Endothelial cell of umbilical vein (primary cell): ENCODE measurements at regions of chr14 and their contacts with region 1.

Region 1: DNA sequence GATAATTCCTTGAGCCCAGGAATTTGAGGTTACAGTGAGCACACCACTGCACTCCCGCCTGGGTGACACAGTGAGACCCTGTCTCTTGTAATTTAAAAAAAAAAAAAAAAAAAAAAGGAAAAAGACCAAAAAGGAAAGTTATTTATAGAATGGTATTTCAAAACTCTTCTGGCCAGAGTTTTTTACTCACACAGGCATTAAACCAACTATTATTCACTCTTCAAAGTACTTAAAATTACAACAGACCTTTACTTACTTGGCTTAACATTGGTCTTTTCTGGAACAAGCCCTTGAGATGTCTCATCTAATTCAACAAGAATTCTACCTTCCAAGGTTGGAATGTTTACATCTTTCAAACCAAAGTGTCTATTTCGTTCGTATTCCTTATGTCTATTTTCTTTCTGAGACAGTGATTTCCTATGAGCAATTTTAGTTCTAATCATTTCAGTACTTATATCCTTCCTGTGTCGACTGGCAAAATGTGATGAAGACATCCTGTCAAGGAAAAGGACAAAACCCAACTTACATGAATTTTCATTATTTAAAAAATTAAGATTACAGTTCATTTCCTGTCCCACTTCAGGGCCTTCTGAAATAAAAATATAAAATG is 2.6 kb downstream of the DLGAP5 start:
- DNase-seq: peak; percentile 56
- H3K4me3 ChIP-seq: peak overlapping the region in 2 of 3 experiments; percentile 40 to 80
- H3K27ac ChIP-seq: peak overlapping the region; percentile 54
- H3K4me1 ChIP-seq: peaks cover 28% of the 10 kb centered on the region
- H3K27me3 ChIP-seq: no peaks in the 10 kb centered on the region
- CTCF ChIP-seq: no peak
- POLR2A ChIP-seq: no peak

Region 2: DNA sequence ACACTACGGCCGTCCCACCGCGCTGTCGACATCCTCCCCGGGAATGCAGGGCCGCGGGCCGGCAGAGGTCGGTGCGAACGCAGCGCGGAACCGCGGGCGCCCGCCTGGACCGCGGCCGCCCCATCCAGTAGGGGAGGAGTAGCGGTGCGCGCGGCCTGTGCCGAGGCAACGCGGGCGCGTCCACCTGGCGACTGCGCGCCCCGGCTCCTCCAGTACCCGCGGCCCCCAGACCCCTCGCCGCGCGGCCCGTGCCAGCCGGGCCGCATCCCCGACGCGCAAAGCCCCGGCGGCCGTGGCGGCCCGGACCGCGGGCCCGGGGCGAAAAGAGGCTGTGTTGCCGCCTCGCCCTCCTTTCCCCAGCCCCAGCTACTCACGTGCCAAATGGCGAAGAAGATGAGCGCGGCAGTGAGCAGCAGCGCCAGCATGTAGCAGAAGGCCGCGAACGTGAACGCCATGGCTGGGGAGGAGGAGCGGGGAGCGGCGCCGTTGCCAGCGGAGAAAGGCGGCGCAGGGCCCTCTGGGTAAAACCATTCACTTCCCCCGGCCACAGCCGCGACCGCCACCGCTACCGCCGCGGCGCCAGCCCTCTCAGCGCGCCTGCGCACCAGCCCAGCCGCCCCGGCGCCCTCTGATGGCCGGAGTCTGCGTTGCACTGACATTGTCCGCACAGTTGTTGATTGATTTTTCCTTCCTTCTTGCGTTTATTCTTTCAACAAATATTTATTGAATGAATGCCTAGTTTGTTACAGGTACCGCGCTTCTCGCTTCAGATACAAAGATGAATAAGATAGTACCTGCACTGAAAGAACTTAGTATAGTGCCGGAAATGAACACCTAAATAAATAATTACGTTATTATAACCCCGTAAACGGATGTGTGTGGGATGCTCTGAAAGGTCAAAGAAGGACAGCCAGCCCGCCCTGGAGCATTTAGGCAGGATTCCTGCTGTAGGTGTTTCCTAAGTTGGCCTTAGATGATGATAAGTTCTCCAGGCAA is 747.6 kb before region 1 on chr14 and contains the start of gene CNIH1:
- CTCF ChIA-PET with region 1: no interaction called
- POLR2A ChIA-PET with region 1: no interaction called
- dilution Hi-C with region 1: no loop called
- intact Hi-C with region 1: loop called (anchors 2 kb)
- DNase-seq: peak; percentile 94
- H3K4me3 ChIP-seq: peak within 1 kb of the TSS; percentile 50 to 90 (median 70)
- H3K27ac ChIP-seq: peak within 1 kb of the TSS; percentile 83
- H3K4me1 ChIP-seq: peaks cover 18% of the 10 kb centered on the region
- H3K27me3 ChIP-seq: peaks cover 10 to 17% of the 10 kb centered on the region in 2 experiments
- CTCF ChIP-seq: peak; percentile 82 to 95
- POLR2A ChIP-seq: peak; percentile 88
- total RNA-seq, gene CNIH1: 125 and 137 TPM in 2 replicates